ENCODE measurements at regions of chr15 and their contacts with region 1.

Region 1: GRCh38 chr15:72599855-72600464 is 54.5 kb upstream of the GOLGA6B start:
- DNase-seq: no peak
- ATAC-seq: peak in 1 of 4 donors; percentile 45
- H3K4me3 ChIP-seq: no peak overlapping the region
- H3K27ac ChIP-seq: no peak overlapping the region
- H3K4me1 ChIP-seq: peaks cover 0 to 3% (median 0%) of the 10 kb centered on the region in 12 donors
- H3K27me3 ChIP-seq: no peaks in the 10 kb centered on the region
- CTCF ChIP-seq: peak; percentile 47 to 73 (median 62)
- POLR2A ChIP-seq: no peak

Region 2: GRCh38 chr15:72671535-72671934 is 71.6 kb after region 1 on chr15:
- intact Hi-C with region 1: loop called in 6 of 10 experiments (anchors 2 to 10 kb)
- DNase-seq: no peak
- ATAC-seq: no peak
- H3K4me3 ChIP-seq: no peak overlapping the region
- H3K27ac ChIP-seq: no peak overlapping the region
- H3K4me1 ChIP-seq: peaks cover 0 to 7% (median 0%) of the 10 kb centered on the region in 12 donors
- H3K27me3 ChIP-seq: peaks cover 0 to 34% (median 6%) of the 10 kb centered on the region in 9 donors
- CTCF ChIP-seq: no peak
- POLR2A ChIP-seq: no peak

Region 3: GRCh38 chr15:73081321-73081958 is 481.5 kb after region 1 on chr15:
- intact Hi-C with region 1: loop called in 2 of 10 experiments (anchors 10 kb)
- DNase-seq: peak in 1 of 5 donors; percentile 20
- ATAC-seq: peak in 2 of 4 donors; percentile 52 to 56
- H3K4me3 ChIP-seq: no peak overlapping the region
- H3K27ac ChIP-seq: no peak overlapping the region
- H3K4me1 ChIP-seq: peaks cover 0 to 17% (median 8%) of the 10 kb centered on the region in 12 donors
- H3K27me3 ChIP-seq: peaks cover 0 to 14% (median 0%) of the 10 kb centered on the region in 9 donors
- CTCF ChIP-seq: peak; percentile 48 to 84 (median 74)
- POLR2A ChIP-seq: no peak

Region 4: DNA sequence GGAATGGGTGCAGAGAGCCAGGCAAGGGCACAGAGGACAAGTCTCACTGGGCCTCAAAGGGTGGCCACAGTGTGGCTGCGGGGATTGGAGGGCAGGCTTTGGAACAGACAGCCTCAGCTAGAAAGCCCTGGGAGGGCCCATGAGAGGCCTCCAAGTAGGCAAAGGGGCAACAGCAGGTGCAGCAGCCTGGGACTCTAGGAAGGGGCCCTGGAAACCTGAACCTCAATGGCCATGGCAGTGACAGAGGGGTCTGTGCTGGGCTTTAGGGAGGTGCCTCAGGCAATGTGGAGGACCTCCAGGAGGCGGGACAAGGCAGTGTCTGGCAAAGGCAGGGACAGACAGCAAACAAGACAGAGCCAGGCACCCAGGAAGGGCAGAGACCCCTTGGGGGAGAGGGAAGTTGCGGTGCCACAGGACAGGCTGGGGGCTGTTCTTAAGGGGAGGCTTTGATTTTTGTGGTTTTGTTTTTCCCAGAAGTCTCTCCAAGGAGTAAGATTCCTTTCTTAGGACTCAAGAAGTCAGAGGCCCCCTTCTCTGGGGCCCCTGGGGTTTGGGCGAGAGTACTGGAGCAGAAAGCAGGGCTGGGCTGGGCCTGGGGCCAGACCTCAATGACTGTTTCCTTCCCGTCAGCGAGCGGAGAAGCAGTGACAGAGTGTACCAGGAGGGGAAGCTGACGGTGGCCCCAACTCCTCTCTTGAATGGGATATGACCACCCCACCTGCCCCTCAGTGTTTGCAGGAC is 1382.4 kb after region 1 on chr15:
- intact Hi-C with region 1: loop called in 1 of 10 experiments (anchors 5 kb)
- DNase-seq: peak; percentile 86 to 96 (median 92)
- ATAC-seq: peak; percentile 87 to 93 (median 90)
- H3K4me3 ChIP-seq: peak overlapping the region in 6 of 12 donors; percentile 6 to 17 (median 10)
- H3K27ac ChIP-seq: peak overlapping the region; percentile 90 to 99 (median 96)
- H3K4me1 ChIP-seq: peaks cover 20 to 80% (median 66%) of the 10 kb centered on the region in 12 donors
- H3K27me3 ChIP-seq: no peaks in the 10 kb centered on the region
- CTCF ChIP-seq: no peak
- POLR2A ChIP-seq: peak in 1 of 2 donors; percentile 22

Measured in heart left ventricle (tissue), 16 donors.